Left cardiac atrium (tissue), 4 donors: ENCODE measurements at regions of chr17 and their contacts with region 1.

Region 1: GRCh38 chr17:42101513-42102319 is 3.4 kb upstream of the ZNF385C start:
- DNase-seq: peak; percentile 82
- ATAC-seq: peak; percentile 80 to 85

Region 2: DNA sequence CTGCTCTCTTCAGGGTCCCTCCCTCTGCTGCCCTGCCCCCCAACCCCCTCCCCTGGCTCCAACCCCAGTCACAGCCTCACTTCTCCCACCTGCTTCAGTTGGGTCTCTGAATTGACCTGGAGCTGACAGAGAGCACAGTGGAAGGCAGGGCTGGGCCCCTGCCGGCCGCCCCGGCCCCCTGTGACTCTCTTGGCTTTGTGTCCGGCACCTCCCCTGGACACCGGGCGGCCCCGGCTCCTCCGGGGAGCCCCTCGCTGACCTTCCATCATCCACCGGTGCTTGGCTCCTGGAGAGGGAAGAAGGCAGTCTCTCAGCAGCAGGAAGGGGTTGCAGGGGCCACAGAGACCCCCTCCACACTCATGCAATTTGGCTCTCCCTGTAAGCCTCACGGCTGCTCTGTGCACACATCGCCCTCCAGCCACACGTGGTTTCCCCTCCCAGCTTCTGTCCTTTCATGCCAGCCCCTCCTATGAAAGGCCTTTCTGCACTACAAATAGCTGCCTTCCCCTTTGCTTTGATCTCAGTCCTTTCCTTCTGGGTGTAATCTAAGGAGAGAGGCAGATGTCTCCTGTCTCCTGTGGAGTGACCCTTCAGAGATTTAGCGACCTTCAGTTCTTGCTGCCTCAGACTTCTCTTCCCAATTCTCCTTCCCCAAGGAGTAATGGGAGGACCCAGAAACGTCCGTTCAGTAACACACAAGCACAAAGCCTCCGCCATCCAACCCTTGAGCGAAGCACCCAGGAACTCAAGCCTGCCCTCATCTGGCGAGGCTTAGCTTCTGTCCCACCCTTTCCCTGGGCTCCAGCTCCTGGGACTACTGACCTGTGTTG is 73.5 kb before region 1 on chr17:
- intact Hi-C with region 1: loop called (anchors 5 kb)
- DNase-seq: no peak
- ATAC-seq: no peak

Region 3: GRCh38 chr17:42067351-42068091 is 34.2 kb before region 1 on chr17:
- intact Hi-C with region 1: loop called in 1 of 2 experiments (anchors 5 kb)
- DNase-seq: peak; percentile 51
- ATAC-seq: peak in 1 of 2 donors; percentile 34